Heart right ventricle (tissue), 16 donors: ENCODE measurements at regions of chr7 and their contacts with region 1.

Region 1: GRCh38 chr7:22302951-22303423 is 54.0 kb downstream of the RAPGEF5 start:
- DNase-seq: no peak
- ATAC-seq: peak in 2 of 8 donors; percentile 25 to 41
- H3K4me3 ChIP-seq: no peak overlapping the region
- H3K27ac ChIP-seq: no peak overlapping the region
- H3K4me1 ChIP-seq: no peaks in the 10 kb centered on the region
- H3K27me3 ChIP-seq: no peaks in the 10 kb centered on the region
- CTCF ChIP-seq: no peak

Region 2: DNA sequence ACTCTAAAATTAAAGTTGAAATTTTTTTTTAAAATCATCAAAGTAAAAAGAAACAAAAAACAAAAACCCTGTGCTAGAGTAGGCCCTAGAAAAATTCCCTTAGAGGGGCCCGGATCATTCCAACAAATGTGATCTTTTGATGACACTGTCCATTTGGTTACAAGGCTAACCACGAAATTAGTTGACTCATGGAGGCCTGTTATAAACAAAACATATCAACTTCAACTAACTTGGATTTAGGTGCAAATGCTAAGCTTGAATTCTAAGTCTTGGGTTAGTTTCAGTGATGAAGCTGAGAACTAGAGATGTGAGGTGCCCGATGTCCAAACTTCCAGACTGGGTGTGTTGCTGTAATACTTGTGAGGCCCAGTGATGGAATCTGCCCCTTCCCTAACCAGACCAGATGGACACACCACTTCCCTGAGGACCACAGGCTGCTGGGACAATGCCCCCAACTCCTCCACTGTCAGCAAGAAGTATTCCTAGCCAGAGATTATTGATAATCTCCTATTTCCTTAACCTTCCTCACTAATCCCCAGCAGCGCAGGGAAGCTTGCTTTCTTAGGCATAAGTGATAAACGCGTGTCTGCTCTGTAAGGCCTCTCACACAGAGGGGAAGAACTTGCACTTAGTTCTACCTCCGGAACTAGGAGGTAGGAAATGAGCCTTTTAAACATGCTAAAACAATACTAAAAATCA is 54.7 kb before region 1 on chr7:
- intact Hi-C with region 1: loop called in 1 of 10 experiments (anchors 10 kb)
- DNase-seq: no peak
- ATAC-seq: peak in 2 of 8 donors; percentile 35 to 51
- H3K4me3 ChIP-seq: no peak overlapping the region
- H3K27ac ChIP-seq: peak overlapping the region in 5 of 10 donors; percentile 36 to 72 (median 51)
- H3K4me1 ChIP-seq: peaks cover 0 to 50% (median 6%) of the 10 kb centered on the region in 9 donors
- H3K27me3 ChIP-seq: no peaks in the 10 kb centered on the region
- CTCF ChIP-seq: no peak

Region 3: GRCh38 chr7:22356010-22356691 is 53.2 kb after region 1 on chr7:
- intact Hi-C with region 1: no loop called
- DNase-seq: no peak
- ATAC-seq: peak in 5 of 8 donors; percentile 27 to 48 (median 33)
- H3K4me3 ChIP-seq: peak overlapping the region; percentile 21 to 63 (median 50)
- H3K27ac ChIP-seq: peak overlapping the region in 6 of 10 donors; percentile 20 to 59 (median 32)
- H3K4me1 ChIP-seq: peaks cover 0 to 23% (median 8%) of the 10 kb centered on the region in 9 donors
- H3K27me3 ChIP-seq: peaks cover 0 to 41% (median 19%) of the 10 kb centered on the region in 7 donors
- CTCF ChIP-seq: no peak